WTC11 (cell line): ENCODE measurements at regions of chr15 and their contacts with region 1.

Region 1: GRCh38 chr15:71743861-71744382 is 66.4 kb upstream of the NR2E3 start:
- DNase-seq: peak; percentile 46
- ATAC-seq: no peak; the same call in 1 of the 2 replicates
- H3K4me3 Mint-ChIP-seq: no peak overlapping the region
- H3K27ac Mint-ChIP-seq: no peak overlapping the region
- H3K4me1 Mint-ChIP-seq: no peaks in the 10 kb centered on the region
- H3K27me3 Mint-ChIP-seq: no peaks in the 10 kb centered on the region
- CTCF ChIP-seq: peak; percentile 67

Region 2: GRCh38 chr15:71386448-71387236 is 357.3 kb before region 1 on chr15:
- CTCF ChIA-PET with region 1: interaction called, 10 read pairs
- POLR2A ChIA-PET with region 1: no interaction called
- DNase-seq: no peak
- ATAC-seq: peak; percentile 90
- H3K4me3 Mint-ChIP-seq: peak overlapping the region; percentile 49
- H3K27ac Mint-ChIP-seq: peak overlapping the region; percentile 99
- H3K4me1 Mint-ChIP-seq: peaks cover 72% of the 10 kb centered on the region
- H3K27me3 Mint-ChIP-seq: peaks cover 9% of the 10 kb centered on the region; the same call in 1 of the 2 replicates
- CTCF ChIP-seq: no peak

Region 3: GRCh38 chr15:71575474-71576045 is 168.4 kb before region 1 on chr15:
- CTCF ChIA-PET with region 1: interaction called, 20 read pairs
- POLR2A ChIA-PET with region 1: no interaction called
- DNase-seq: no peak
- ATAC-seq: no peak
- H3K4me3 Mint-ChIP-seq: no peak overlapping the region
- H3K27ac Mint-ChIP-seq: no peak overlapping the region
- H3K4me1 Mint-ChIP-seq: peaks cover 22% of the 10 kb centered on the region
- H3K27me3 Mint-ChIP-seq: no peaks in the 10 kb centered on the region
- CTCF ChIP-seq: no peak; the same call in 1 of the 2 replicates

Region 4: GRCh38 chr15:71685420-71685993 is 58.4 kb before region 1 on chr15:
- CTCF ChIA-PET with region 1: no interaction called
- POLR2A ChIA-PET with region 1: no interaction called
- DNase-seq: no peak
- ATAC-seq: no peak
- H3K4me3 Mint-ChIP-seq: no peak overlapping the region
- H3K27ac Mint-ChIP-seq: no peak overlapping the region
- H3K4me1 Mint-ChIP-seq: peaks cover 4% of the 10 kb centered on the region
- H3K27me3 Mint-ChIP-seq: 0 out of 2 replicates have a peak, but pooled peaks cover 2% of the 10 kb centered on the region
- CTCF ChIP-seq: no peak

Region 5: DNA sequence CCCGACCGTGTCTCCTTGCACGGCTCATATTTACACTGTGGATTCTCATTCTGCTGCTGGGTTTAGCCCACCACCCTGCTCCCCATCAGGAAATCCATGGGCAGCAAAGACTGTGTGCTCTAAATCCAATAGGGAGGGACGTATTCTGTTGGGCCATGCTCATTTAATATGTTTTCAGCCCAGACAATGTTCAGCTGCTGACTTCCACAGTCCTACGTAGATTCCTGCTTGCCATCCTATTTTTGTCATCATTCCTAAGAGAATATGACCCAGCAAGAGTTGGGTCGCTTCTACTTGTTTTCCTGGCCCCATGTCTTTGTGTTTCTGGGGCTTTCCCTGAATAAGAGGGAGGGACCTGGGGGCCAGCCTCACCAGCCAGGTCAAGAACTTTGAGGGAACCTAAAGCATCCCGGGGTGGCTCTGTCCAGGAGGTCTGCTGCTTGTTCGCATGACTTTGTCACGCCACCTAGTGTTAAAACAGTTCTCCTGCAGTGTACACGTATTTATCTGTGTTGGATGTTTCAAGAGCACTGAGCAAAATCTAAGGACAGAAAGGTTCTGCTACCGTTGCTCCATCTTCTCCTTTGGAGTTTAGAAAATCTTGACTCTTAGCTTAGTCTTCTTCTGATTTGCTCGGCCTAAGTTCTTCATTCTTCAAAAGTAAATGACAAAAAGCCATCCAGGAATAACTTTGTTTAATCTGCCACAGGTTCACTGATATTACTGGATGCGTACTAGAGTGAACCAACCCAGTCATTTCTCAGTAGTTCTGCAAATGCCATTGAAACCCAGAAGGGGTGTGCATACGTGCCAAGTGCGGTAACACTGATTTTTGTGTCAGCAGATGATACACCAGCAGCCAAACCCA is 13.4 kb before region 1 on chr15:
- CTCF ChIA-PET with region 1: interaction called, 16 read pairs
- POLR2A ChIA-PET with region 1: no interaction called
- DNase-seq: peak; percentile 40
- ATAC-seq: peak; percentile 78
- H3K4me3 Mint-ChIP-seq: no peak overlapping the region
- H3K27ac Mint-ChIP-seq: no peak overlapping the region
- H3K4me1 Mint-ChIP-seq: no peaks in the 10 kb centered on the region
- H3K27me3 Mint-ChIP-seq: no peaks in the 10 kb centered on the region
- CTCF ChIP-seq: peak; percentile 80

Region 6: DNA sequence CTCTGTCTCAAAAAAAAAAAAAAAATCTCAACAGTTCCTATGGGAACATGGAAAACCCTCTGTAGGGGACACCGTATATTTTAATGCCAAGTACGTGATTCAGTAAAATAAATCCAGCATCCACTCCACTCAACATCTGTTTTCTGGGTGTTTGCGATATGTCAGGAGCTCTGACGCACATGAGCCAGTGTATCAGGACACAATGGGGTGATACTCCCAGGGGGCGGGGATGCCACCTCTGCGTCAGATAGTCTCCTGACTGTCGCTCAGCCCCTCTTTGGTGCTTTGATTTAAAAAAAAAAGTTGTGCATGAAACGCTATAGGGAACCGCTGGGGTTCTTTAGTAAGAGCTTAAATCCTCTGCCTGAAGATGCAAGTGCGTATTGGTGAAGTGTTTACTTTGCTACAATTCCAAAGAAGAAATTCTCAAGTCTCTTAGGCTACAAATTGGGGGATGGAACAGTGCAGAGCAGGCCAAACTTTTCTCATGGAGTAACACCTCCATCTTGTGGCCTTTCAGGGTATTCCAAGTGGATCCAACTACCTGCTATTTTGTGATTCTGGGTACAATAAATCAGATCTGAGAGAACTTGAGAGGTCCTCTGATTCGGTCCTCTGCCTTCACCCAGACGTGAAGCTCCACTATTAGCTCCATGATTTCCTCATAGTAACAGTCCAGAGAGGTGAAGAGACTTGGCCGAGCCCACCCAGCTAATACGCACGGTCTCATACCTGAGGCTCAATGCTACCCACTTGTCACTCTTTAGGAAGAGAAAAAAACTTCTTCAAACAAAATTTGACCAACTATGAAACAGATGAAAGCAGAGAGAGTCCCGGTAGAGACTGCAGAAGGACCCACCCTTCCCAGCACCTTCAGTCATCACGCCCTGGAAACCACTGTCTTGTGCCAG is 57.2 kb after region 1 on chr15:
- CTCF ChIA-PET with region 1: interaction called, 34 read pairs
- POLR2A ChIA-PET with region 1: no interaction called
- DNase-seq: peak; percentile 46
- ATAC-seq: peak; percentile 72
- H3K4me3 Mint-ChIP-seq: no peak overlapping the region
- H3K27ac Mint-ChIP-seq: no peak overlapping the region; the same call in 1 of the 2 replicates
- H3K4me1 Mint-ChIP-seq: peaks cover 25% of the 10 kb centered on the region
- H3K27me3 Mint-ChIP-seq: peaks cover 2% of the 10 kb centered on the region; the same call in 1 of the 2 replicates
- CTCF ChIP-seq: peak; percentile 82

Region 7: GRCh38 chr15:72155635-72156616 is 412.0 kb after region 1 on chr15:
- CTCF ChIA-PET with region 1: interaction called, 24 read pairs
- POLR2A ChIA-PET with region 1: interaction called, 5 read pairs
- DNase-seq: peak; percentile 91
- ATAC-seq: peak; percentile 94
- H3K4me3 Mint-ChIP-seq: peak overlapping the region; percentile 27
- H3K27ac Mint-ChIP-seq: no peak overlapping the region
- H3K4me1 Mint-ChIP-seq: peaks cover 9% of the 10 kb centered on the region
- H3K27me3 Mint-ChIP-seq: no peaks in the 10 kb centered on the region; the same call in 1 of the 2 replicates
- CTCF ChIP-seq: peak; percentile 84